Gastrocnemius medialis (tissue), 4 donors: ENCODE measurements at regions of chr7 and their contacts with region 1.

Region 1: GRCh38 chr7:130345120-130345519 is 504 bp downstream of the CPA5 start:
- DNase-seq: no peak
- ATAC-seq: no peak
- H3K4me3 ChIP-seq: no peak overlapping the region
- H3K27ac ChIP-seq: no peak overlapping the region
- H3K4me1 ChIP-seq: no peaks in the 10 kb centered on the region
- H3K27me3 ChIP-seq: no peaks in the 10 kb centered on the region
- CTCF ChIP-seq: no peak
- POLR2A ChIP-seq: no peak

Region 2: GRCh38 chr7:130432886-130433285 is 87.8 kb after region 1 on chr7:
- in situ Hi-C with region 1: no loop called
- intact Hi-C with region 1: loop called (anchors 2 kb)
- DNase-seq: no peak
- ATAC-seq: no peak
- H3K4me3 ChIP-seq: no peak overlapping the region
- H3K27ac ChIP-seq: no peak overlapping the region
- H3K4me1 ChIP-seq: peaks cover 4 to 16% of the 10 kb centered on the region in 2 donors
- H3K27me3 ChIP-seq: no peaks in the 10 kb centered on the region
- CTCF ChIP-seq: no peak
- POLR2A ChIP-seq: no peak

Region 3: DNA sequence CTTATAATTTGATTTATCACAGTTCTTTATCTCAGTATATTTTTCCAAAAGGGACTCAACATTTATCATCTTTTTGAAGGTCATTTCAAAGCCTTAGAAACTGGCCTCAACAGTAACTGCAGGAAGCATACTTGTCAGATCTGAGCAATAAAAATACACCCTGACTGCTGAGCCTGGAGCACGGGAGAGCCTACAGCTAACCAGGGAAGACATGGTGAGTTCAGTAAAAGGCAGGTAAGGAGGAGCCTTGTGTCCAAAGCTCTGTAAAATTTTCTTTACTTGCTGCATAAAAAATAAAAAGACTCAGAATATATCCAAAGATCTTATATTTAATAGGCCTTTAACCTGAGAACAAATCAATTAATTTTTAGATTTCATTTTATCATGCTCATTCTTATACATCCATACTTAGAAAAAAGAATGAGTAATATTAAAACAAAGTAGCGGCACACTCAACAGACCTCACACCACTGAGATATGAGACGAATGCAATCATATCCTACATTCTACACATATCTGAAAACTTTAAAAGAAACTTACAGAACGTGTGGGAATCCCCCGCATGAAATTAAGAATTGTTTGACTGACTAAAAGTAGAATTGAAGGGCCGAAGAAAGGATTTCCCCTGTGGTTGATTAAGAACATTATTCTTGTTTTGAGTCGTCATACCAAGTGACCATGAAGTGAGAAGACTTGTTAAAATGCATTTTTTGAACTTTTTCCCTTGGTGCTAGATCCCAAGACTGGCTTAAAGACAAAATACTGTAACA is 686.2 kb after region 1 on chr7:
- in situ Hi-C with region 1: no loop called
- intact Hi-C with region 1: no loop called
- DNase-seq: no peak
- ATAC-seq: no peak
- H3K4me3 ChIP-seq: no peak overlapping the region
- H3K27ac ChIP-seq: peak overlapping the region in 2 of 4 donors; percentile 11 to 19
- H3K4me1 ChIP-seq: peaks cover 86 to 95% of the 10 kb centered on the region in 2 donors
- H3K27me3 ChIP-seq: no peaks in the 10 kb centered on the region
- CTCF ChIP-seq: no peak
- POLR2A ChIP-seq: no peak